Panc1 (cell line): ENCODE measurements at regions of chr11 and their contacts with region 1.

Region 1: GRCh38 chr11:86068951-86069407 is at the start of gene PICALM:
- DNase-seq: peak; percentile 92
- ATAC-seq: peak; percentile 93
- H3K4me3 ChIP-seq: peak within 1 kb of the TSS; percentile 69 to 76
- H3K27ac ChIP-seq: peak within 1 kb of the TSS; percentile 99
- H3K4me1 ChIP-seq: peaks cover 34% of the 10 kb centered on the region
- H3K27me3 ChIP-seq: no peaks in the 10 kb centered on the region
- CTCF ChIP-seq: no peak
- total RNA-seq, gene PICALM: 153 TPM

Region 2: GRCh38 chr11:86182976-86183584 is 114.1 kb after region 1 on chr11:
- CTCF ChIA-PET with region 1: no interaction called
- POLR2A ChIA-PET with region 1: interaction called, 15 read pairs
- in situ Hi-C with region 1: no loop called
- intact Hi-C with region 1: no loop called
- DNase-seq: no peak
- ATAC-seq: no peak
- H3K4me3 ChIP-seq: no peak overlapping the region
- H3K27ac ChIP-seq: no peak overlapping the region
- H3K4me1 ChIP-seq: peaks cover 3% of the 10 kb centered on the region; the same call in 1 of the 2 replicates
- H3K27me3 ChIP-seq: no peaks in the 10 kb centered on the region; the same call in 1 of the 2 replicates
- CTCF ChIP-seq: no peak